Naive thymus-derived CD4-positive, alpha-beta T cell (primary cell): ENCODE measurements at regions of chr10 and their contacts with region 1.

Region 1: GRCh38 chr10:22316285-22317120 is at the start of gene COMMD3:
- DNase-seq: peak; percentile 71 to 85 (median 80)
- ATAC-seq: peak; percentile 84
- H3K4me3 ChIP-seq: peak within 1 kb of the TSS; percentile 73
- H3K4me3 Mint-ChIP-seq: peak within 1 kb of the TSS; percentile 85 to 99 (median 96)
- H3K27ac ChIP-seq: peak within 1 kb of the TSS; percentile 80
- H3K27ac Mint-ChIP-seq: peak within 1 kb of the TSS; percentile 87 to 99 (median 96)
- H3K4me1 ChIP-seq: peaks cover 16 to 25% of the 10 kb centered on the region in 2 donors
- H3K4me1 Mint-ChIP-seq: peaks cover 11 to 53% (median 46%) of the 10 kb centered on the region in 7 donors
- H3K27me3 ChIP-seq: peaks cover 0 to 13% of the 10 kb centered on the region in 2 donors
- H3K27me3 Mint-ChIP-seq: peaks cover 0 to 18% (median 14%) of the 10 kb centered on the region in 5 donors
- total RNA-seq, gene COMMD3: 33.9 to 83.7 (median 51.2) TPM

Region 2: DNA sequence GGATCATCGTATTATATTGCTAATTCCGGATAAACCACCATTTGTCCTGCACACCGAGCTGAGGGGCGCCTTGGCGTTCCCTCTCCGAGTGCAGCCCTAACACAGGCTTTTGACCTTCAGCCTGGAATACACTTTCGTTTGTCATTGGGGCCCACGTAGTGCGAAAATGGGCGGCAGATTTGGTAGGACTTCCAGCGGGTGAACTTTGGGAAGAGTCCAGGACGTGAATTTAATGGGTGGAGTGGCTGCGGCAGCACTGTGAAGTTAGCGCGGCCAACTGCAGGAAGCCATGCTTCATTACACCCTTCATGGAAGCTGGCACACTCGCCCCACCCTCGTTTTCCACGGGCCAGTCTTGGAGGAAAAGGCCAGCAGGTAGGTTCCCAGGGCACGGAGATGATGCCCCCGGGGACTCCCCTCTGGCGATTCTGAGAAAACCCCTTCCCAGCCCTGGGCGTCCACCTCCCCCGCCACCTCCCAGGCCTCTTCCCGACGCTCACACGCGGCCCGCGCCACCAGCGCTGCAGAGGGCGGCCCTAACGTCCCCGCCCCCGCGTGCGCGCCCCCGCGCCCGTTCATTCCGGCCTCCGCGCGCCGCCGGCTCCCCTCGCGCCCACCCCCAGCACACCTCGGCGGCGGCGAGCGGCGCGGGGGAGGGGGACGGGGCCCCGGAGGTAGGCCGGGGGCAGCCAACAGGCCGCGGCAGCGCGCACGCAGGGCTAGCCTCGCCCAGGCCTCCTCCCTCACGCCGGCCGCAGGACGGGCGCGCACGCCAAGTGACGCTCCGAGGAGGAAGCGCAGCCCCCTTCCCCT is 782.8 kb before region 1 on chr10 and contains the start of gene MLLT10:
- CTCF ChIA-PET with region 1: no interaction called
- POLR2A ChIA-PET with region 1: interaction called, 3 read pairs
- intact Hi-C with region 1: loop called (anchors 2 to 5 kb)
- DNase-seq: peak; percentile 90 to 96 (median 94)
- ATAC-seq: peak; percentile 95
- H3K4me3 ChIP-seq: peak within 1 kb of the TSS; percentile 81
- H3K4me3 Mint-ChIP-seq: peak within 1 kb of the TSS; percentile 90 to 98 (median 97)
- H3K27ac ChIP-seq: peak within 1 kb of the TSS; percentile 83
- H3K27ac Mint-ChIP-seq: peak within 1 kb of the TSS; percentile 91 to 98 (median 97)
- H3K4me1 ChIP-seq: peaks cover 8 to 15% of the 10 kb centered on the region in 2 donors
- H3K4me1 Mint-ChIP-seq: peaks cover 14 to 36% (median 27%) of the 10 kb centered on the region in 7 donors
- H3K27me3 ChIP-seq: no peaks in the 10 kb centered on the region
- H3K27me3 Mint-ChIP-seq: peaks cover 0 to 18% (median 0%) of the 10 kb centered on the region in 5 donors
- total RNA-seq, gene MLLT10: 50.0 to 74.2 (median 67.9) TPM

Region 3: GRCh38 chr10:22228943-22229801 is 87.3 kb before region 1 on chr10:
- CTCF ChIA-PET with region 1: interaction called, 6 read pairs
- POLR2A ChIA-PET with region 1: interaction called, 72 read pairs
- intact Hi-C with region 1: loop called (anchors 1 kb)
- DNase-seq: peak; percentile 74 to 94 (median 92)
- ATAC-seq: peak; percentile 95
- H3K4me3 ChIP-seq: peak overlapping the region; percentile 85
- H3K4me3 Mint-ChIP-seq: peak overlapping the region; percentile 84 to 99 (median 94)
- H3K27ac ChIP-seq: peak overlapping the region; percentile 70
- H3K27ac Mint-ChIP-seq: peak overlapping the region; percentile 96 to 100 (median 99)
- H3K4me1 ChIP-seq: peaks cover 6 to 8% of the 10 kb centered on the region in 2 donors
- H3K4me1 Mint-ChIP-seq: peaks cover 11 to 27% (median 15%) of the 10 kb centered on the region in 7 donors
- H3K27me3 ChIP-seq: no peaks in the 10 kb centered on the region
- H3K27me3 Mint-ChIP-seq: peaks cover 0 to 20% (median 5%) of the 10 kb centered on the region in 5 donors

Region 4: DNA sequence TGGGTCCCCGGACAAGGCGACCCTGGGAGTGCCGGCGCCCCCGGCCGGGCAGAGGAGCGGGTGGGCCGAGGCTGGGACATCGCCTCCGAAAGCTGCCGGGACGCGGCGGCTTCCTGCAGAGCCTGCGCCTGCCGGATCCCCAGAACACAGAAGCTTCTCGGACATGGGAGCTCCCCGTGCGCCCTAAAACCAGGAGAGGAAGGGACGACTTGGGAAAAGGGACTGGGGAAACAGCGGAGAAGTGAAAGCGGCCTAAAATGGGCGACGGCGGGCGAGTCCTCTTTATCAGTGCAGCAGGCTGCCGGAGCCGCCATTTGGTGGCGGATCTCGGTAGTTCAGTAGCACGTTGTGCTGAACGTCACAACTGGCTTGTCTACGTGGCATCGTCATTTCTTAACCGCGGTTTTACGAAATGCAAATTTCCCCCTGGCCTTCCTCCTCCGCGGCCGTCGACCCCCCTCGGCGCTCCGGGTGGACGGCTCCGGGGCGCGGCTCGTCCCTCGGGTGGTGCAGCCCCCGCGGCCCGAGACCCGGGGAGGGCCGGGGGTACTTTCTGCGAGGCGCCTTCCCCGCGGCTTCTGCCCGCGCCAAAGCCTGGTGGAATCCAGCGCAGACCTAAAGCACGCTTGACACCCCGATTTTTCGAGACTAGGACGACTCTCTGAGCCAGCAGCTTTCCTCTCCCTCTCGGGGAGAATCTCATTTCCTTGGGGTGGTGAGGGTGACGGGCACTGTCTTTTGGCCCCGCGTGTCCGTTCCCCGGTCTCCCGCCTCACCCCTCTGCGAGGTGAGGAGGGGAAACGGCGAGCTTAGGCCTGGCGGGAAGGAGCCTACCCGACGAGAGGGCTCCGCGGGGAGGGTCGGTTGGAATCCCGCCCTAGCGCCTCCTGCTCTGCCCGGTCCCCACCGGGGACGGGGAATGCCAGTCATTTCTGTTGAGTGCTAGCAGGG is 18.9 kb after region 1 on chr10:
- CTCF ChIA-PET with region 1: interaction called, 8 read pairs
- POLR2A ChIA-PET with region 1: interaction called, 28 read pairs
- intact Hi-C with region 1: loop called (anchors 1 kb)
- DNase-seq: peak; percentile 51 to 83 (median 77)
- ATAC-seq: peak; percentile 90
- H3K4me3 ChIP-seq: peak overlapping the region; percentile 57
- H3K4me3 Mint-ChIP-seq: peak overlapping the region; percentile 82 to 91 (median 87)
- H3K27ac ChIP-seq: peak overlapping the region; percentile 63
- H3K27ac Mint-ChIP-seq: peak overlapping the region; percentile 84 to 95 (median 92)
- H3K4me1 ChIP-seq: peaks cover 37 to 38% of the 10 kb centered on the region in 2 donors
- H3K4me1 Mint-ChIP-seq: peaks cover 7 to 55% (median 35%) of the 10 kb centered on the region in 7 donors
- H3K27me3 ChIP-seq: peaks cover 25 to 47% of the 10 kb centered on the region in 2 donors
- H3K27me3 Mint-ChIP-seq: peaks cover 30 to 57% (median 52%) of the 10 kb centered on the region in 5 donors

Region 5: DNA sequence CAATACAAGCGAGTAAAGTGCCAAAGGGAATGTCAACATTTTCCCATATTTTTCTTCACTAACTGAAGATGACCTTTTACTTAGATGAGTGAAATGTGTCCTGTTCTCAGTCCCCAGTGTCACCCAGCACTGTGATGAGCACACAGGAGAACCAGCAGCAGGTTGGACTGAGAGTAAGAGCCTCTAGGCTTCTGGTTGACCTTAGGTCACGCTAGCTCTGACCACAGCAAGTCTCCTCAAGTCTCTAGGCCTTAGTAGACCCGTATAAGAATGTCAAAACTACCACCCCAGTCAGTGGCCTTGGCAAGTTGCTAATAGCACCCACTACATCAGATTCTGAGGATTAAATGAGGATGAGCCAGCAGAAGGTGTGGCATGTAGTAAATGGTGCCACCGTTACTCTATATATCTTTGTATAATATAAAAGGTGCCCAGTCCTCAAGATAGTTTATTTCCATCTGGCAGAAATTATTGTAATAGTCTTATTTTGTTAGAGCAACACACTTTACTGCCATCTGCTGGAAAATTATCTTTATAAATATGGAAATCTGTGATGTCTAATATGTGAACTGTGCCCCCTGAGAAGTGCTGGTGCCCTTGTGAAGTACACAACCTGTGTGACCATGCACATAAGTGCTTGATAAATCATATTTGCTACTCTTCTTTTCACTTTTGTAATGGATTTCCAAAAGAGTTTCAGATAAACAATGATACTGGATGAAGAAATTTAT is 104.4 kb after region 1 on chr10:
- CTCF ChIA-PET with region 1: interaction called, 4 read pairs
- POLR2A ChIA-PET with region 1: no interaction called
- intact Hi-C with region 1: loop called in 1 of 2 experiments (anchors 2 kb)
- DNase-seq: peak in 4 of 9 donors; percentile 15 to 41 (median 40)
- ATAC-seq: peak; percentile 54
- H3K4me3 ChIP-seq: no peak overlapping the region
- H3K4me3 Mint-ChIP-seq: no peak overlapping the region
- H3K27ac ChIP-seq: no peak overlapping the region
- H3K27ac Mint-ChIP-seq: no peak overlapping the region
- H3K4me1 ChIP-seq: no peaks in the 10 kb centered on the region
- H3K4me1 Mint-ChIP-seq: peaks cover 0 to 3% (median 0%) of the 10 kb centered on the region in 7 donors
- H3K27me3 ChIP-seq: no peaks in the 10 kb centered on the region
- H3K27me3 Mint-ChIP-seq: peaks cover 0 to 4% (median 0%) of the 10 kb centered on the region in 5 donors

Region 6: GRCh38 chr10:22615819-22616499 is 299.5 kb after region 1 on chr10:
- CTCF ChIA-PET with region 1: no interaction called
- POLR2A ChIA-PET with region 1: interaction called, 3 read pairs
- intact Hi-C with region 1: loop called (anchors 5 kb)
- DNase-seq: no peak
- ATAC-seq: peak; percentile 45
- H3K4me3 ChIP-seq: peak overlapping the region; percentile 38
- H3K4me3 Mint-ChIP-seq: peak overlapping the region; percentile 5 to 72 (median 26)
- H3K27ac ChIP-seq: peak overlapping the region; percentile 16
- H3K27ac Mint-ChIP-seq: peak overlapping the region; percentile 26 to 94 (median 75)
- H3K4me1 ChIP-seq: peaks cover 77 to 98% of the 10 kb centered on the region in 2 donors
- H3K4me1 Mint-ChIP-seq: peaks cover 75 to 100% (median 96%) of the 10 kb centered on the region in 7 donors
- H3K27me3 ChIP-seq: no peaks in the 10 kb centered on the region
- H3K27me3 Mint-ChIP-seq: no peaks in the 10 kb centered on the region